Naive thymus-derived CD4-positive, alpha-beta T cell (primary cell): ENCODE measurements at regions of chr11 and their contacts with region 1.

Region 1: DNA sequence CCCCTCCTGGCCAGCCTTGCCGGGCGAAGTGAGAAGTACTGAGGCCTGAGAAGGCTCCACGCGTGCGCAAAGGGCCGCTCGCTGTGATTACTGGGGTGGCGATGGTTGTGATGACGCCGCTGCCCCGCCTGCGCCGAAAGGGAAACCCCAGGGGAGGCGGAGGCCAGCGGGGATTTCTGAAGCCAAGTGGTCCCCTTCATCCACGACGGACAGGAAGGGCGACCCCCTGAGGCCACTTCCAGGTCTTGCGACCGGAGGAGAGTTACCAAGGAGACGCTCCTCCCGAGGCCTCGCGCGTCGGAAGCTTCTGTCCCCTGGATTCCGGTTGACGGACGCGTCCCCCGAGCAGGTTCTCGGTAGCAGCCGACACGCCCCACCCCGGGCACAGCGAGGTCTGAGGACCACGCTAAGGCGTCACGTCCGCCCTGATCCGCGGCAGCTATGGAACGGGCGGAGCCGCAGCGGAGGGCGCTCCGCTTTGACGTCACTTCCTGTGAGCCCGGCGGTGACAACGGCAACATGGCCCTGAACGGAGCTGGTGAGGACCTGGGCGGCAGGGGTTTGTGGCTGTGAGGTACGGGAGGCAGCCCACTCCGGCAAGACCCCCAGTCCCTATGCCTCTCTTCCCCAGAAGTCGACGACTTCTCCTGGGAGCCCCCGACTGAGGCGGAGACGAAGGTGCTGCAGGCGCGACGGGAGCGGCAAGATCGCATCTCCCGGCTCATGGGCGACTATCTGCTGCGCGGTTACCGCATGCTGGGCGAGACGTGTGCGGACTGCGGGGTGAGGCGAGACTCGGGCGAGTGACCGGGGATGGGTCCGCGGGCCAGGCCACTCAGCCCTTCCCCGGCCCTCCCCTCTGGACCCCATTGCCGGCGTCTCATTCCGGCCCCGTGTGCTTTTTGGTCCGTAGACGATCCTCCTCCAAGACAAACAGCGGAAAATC is at the start of gene ZNRD2:
- DNase-seq: peak; percentile 94 to 99 (median 98)
- ATAC-seq: peak; percentile 82
- H3K4me3 ChIP-seq: peak within 1 kb of the TSS; percentile 96
- H3K4me3 Mint-ChIP-seq: peak within 1 kb of the TSS; percentile 91 to 100 (median 97)
- H3K27ac ChIP-seq: peak within 1 kb of the TSS; percentile 96
- H3K27ac Mint-ChIP-seq: peak within 1 kb of the TSS; percentile 89 to 100 (median 99)
- H3K4me1 ChIP-seq: peaks cover 63 to 64% of the 10 kb centered on the region in 2 donors
- H3K4me1 Mint-ChIP-seq: peaks cover 49 to 77% (median 69%) of the 10 kb centered on the region in 7 donors
- H3K27me3 ChIP-seq: no peaks in the 10 kb centered on the region
- H3K27me3 Mint-ChIP-seq: no peaks in the 10 kb centered on the region
- total RNA-seq, gene ZNRD2: 29.1 to 40.9 (median 32.9) TPM

Region 2: DNA sequence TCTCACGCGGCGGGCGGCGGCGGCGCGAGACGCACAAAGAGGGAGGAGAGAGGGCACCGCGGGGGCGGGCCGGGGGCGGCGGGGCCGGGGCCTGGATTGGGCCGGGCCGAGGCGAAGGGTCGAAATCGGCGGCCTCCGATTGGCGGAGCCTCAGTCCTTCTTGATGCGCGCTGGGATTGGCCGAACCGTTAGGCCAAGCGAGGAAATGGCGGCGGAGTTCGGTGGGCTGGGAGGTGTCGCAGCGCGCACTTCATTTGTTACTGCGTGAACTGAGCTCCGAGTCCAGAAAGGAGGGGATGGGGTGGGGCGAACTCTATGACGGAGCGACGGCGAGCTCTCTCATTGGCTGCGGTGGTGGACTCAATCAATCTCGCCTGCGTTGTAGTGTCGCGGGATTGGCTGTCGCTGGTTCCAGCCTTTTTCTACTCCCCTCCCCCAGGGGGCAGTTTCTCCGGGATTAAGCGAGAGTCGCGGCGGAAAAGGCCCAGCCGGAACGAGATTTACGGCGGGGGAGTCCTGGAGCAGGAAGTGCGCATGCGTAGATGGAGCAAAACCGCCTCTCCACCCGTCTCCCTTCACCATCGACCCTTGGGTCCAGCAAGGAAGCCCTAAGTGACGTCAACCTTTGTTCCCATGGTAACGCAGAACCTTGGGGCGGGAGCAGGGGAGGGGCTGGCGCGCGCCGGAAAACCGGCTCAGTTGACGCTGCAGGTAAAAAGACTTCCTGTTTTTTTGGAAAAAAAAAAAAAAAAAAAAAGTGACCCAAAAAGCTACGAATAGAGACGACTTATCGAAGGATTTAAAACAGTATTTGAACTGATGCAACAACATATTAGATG is 791.5 kb before region 1 on chr11 and contains the start of gene SF1:
- CTCF ChIA-PET with region 1: no interaction called
- POLR2A ChIA-PET with region 1: no interaction called
- intact Hi-C with region 1: loop called in 1 of 2 experiments (anchors 2 kb)
- DNase-seq: peak; percentile 86 to 100 (median 100)
- ATAC-seq: peak; percentile 89
- H3K4me3 ChIP-seq: peak within 1 kb of the TSS; percentile 94
- H3K4me3 Mint-ChIP-seq: peak within 1 kb of the TSS; percentile 90 to 97 (median 94)
- H3K27ac ChIP-seq: peak within 1 kb of the TSS; percentile 99
- H3K27ac Mint-ChIP-seq: peak within 1 kb of the TSS; percentile 98 to 100 (median 99)
- H3K4me1 ChIP-seq: peaks cover 48 to 52% of the 10 kb centered on the region in 2 donors
- H3K4me1 Mint-ChIP-seq: peaks cover 51 to 71% (median 64%) of the 10 kb centered on the region in 7 donors
- H3K27me3 ChIP-seq: no peaks in the 10 kb centered on the region
- H3K27me3 Mint-ChIP-seq: peaks cover 0 to 5% (median 0%) of the 10 kb centered on the region in 5 donors
- total RNA-seq, gene SF1: 462 to 1,612 (median 904) TPM

Region 3: DNA sequence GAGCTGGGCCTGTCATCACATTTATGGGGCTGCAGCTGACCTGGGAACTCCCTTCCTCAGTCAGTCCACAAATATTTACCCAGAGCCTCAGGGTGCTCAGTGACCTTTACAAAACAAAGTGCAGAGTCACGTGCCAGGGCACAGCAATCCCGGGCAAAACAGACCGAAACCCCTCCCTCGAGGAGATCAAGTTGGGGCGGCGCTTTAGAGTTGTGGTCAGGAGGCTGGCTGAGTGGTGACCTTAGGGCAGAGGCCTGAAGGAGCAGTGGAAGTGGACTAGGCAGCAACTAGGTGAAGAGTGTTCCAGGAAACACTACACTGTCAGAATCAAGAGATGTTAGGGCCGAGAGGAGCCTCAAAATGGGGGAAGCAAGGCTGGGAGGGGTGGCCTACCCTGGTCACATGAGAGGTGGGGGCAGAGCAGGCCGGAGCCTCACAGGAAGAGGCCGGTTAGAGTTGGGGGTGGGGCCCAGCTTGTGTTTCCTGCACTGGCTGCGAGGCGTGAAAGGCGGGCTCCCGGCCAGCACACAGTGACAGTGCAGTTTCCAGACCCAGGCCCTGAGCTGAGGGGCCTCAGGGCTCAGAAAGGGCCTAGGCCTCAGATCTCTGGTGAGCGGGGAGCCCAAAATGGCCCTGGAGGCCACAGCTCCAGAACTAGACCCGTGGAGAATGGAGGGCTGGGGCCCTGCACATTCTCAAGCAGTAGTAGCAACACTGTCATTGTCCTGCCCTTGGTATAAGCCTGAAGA is 151.4 kb before region 1 on chr11:
- CTCF ChIA-PET with region 1: no interaction called
- POLR2A ChIA-PET with region 1: interaction called, 8 read pairs
- intact Hi-C with region 1: loop called (anchors 2 kb)
- DNase-seq: peak; percentile 33 to 89 (median 48)
- ATAC-seq: peak; percentile 51
- H3K4me3 ChIP-seq: peak overlapping the region; percentile 82
- H3K4me3 Mint-ChIP-seq: peak overlapping the region; percentile 92 to 100 (median 97)
- H3K27ac ChIP-seq: peak overlapping the region; percentile 98
- H3K27ac Mint-ChIP-seq: peak overlapping the region; percentile 97 to 100 (median 99)
- H3K4me1 ChIP-seq: peaks cover 36 to 46% of the 10 kb centered on the region in 2 donors
- H3K4me1 Mint-ChIP-seq: peaks cover 36 to 65% (median 45%) of the 10 kb centered on the region in 7 donors
- H3K27me3 ChIP-seq: no peaks in the 10 kb centered on the region
- H3K27me3 Mint-ChIP-seq: peaks cover 0 to 15% (median 0%) of the 10 kb centered on the region in 5 donors

Region 4: DNA sequence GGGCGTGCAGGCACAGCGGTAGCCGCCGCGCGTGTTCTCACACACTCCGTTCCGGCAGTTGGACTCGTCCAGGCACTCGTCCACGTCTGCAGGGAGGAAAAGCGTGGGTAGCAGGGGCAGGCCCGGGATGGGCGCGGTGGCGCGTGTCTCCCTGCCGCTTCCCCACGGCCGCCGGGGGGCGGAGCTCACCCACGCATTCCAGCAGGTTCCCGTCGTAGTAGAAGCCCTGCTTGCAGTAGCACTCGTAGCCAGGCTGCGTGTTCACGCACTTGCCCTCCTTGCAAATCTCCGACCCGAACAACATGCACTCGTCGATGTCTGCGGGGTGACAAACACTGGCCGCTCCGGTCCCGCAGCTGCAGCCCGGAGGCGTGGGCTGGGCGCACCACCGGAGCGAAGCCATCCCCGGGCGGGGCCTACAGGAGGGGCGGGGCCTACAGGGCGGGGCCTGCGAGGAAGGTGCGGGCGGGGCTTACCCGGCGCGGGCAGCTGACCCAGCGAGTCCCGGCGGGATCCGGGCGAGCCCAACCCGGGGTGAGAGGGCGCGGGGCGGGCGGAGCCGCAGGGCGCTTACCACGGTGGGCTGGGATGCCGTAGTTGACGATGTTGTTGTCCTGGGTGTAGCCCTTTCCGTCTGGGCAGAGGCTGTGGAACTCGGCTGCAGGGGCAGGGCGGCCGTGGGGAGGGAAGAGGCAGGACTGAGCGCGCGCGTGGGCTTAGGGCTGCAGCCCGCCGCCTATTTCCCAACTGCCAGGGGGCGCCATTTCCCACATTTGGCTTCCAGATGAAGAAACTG is 29.8 kb before region 1 on chr11:
- CTCF ChIA-PET with region 1: interaction called, 57 read pairs
- POLR2A ChIA-PET with region 1: interaction called, 186 read pairs
- intact Hi-C with region 1: loop called (anchors 1 kb)
- DNase-seq: peak; percentile 84 to 95 (median 91)
- ATAC-seq: peak; percentile 94
- H3K4me3 ChIP-seq: peak overlapping the region; percentile 71
- H3K4me3 Mint-ChIP-seq: peak overlapping the region; percentile 81 to 90 (median 84)
- H3K27ac ChIP-seq: peak overlapping the region; percentile 74
- H3K27ac Mint-ChIP-seq: peak overlapping the region in 8 of 9 donors; percentile 70 to 92 (median 86)
- H3K4me1 ChIP-seq: peaks cover 12 to 18% of the 10 kb centered on the region in 2 donors
- H3K4me1 Mint-ChIP-seq: peaks cover 13 to 32% (median 22%) of the 10 kb centered on the region in 7 donors
- H3K27me3 ChIP-seq: no peaks in the 10 kb centered on the region
- H3K27me3 Mint-ChIP-seq: no peaks in the 10 kb centered on the region

Region 5: GRCh38 chr11:65558002-65558931 is 12.0 kb before region 1 on chr11 and contains the start of gene LTBP3:
- CTCF ChIA-PET with region 1: interaction called, 18 read pairs
- POLR2A ChIA-PET with region 1: interaction called, 186 read pairs
- intact Hi-C with region 1: loop called (anchors 1 kb)
- DNase-seq: peak in 2 of 9 donors; percentile 57 to 58
- ATAC-seq: peak; percentile 43
- H3K4me3 ChIP-seq: peak within 1 kb of the TSS; percentile 53
- H3K4me3 Mint-ChIP-seq: peak within 1 kb of the TSS; percentile 89 to 98 (median 94)
- H3K27ac ChIP-seq: peak within 1 kb of the TSS; percentile 89
- H3K27ac Mint-ChIP-seq: peak within 1 kb of the TSS; percentile 84 to 97 (median 92)
- H3K4me1 ChIP-seq: peaks cover 20 to 58% of the 10 kb centered on the region in 2 donors
- H3K4me1 Mint-ChIP-seq: peaks cover 46 to 73% (median 59%) of the 10 kb centered on the region in 7 donors
- H3K27me3 ChIP-seq: no peaks in the 10 kb centered on the region
- H3K27me3 Mint-ChIP-seq: no peaks in the 10 kb centered on the region
- total RNA-seq, gene LTBP3: 91.4 to 288 (median 280) TPM

Region 6: GRCh38 chr11:65637794-65638317 is 67.6 kb after region 1 on chr11 and contains the start of gene SIPA1:
- CTCF ChIA-PET with region 1: no interaction called
- POLR2A ChIA-PET with region 1: interaction called, 20 read pairs
- intact Hi-C with region 1: loop called in 1 of 2 experiments (anchors 2 kb)
- DNase-seq: peak; percentile 57 to 93 (median 74)
- ATAC-seq: peak; percentile 62
- H3K4me3 ChIP-seq: peak within 1 kb of the TSS; percentile 90
- H3K4me3 Mint-ChIP-seq: peak within 1 kb of the TSS; percentile 89 to 99 (median 95)
- H3K27ac ChIP-seq: peak within 1 kb of the TSS; percentile 97
- H3K27ac Mint-ChIP-seq: peak within 1 kb of the TSS; percentile 76 to 100 (median 97)
- H3K4me1 ChIP-seq: peaks cover 45 to 58% of the 10 kb centered on the region in 2 donors
- H3K4me1 Mint-ChIP-seq: peaks cover 26 to 52% (median 47%) of the 10 kb centered on the region in 7 donors
- H3K27me3 ChIP-seq: no peaks in the 10 kb centered on the region
- H3K27me3 Mint-ChIP-seq: no peaks in the 10 kb centered on the region
- total RNA-seq, gene SIPA1: 145 to 249 (median 198) TPM

Region 7: DNA sequence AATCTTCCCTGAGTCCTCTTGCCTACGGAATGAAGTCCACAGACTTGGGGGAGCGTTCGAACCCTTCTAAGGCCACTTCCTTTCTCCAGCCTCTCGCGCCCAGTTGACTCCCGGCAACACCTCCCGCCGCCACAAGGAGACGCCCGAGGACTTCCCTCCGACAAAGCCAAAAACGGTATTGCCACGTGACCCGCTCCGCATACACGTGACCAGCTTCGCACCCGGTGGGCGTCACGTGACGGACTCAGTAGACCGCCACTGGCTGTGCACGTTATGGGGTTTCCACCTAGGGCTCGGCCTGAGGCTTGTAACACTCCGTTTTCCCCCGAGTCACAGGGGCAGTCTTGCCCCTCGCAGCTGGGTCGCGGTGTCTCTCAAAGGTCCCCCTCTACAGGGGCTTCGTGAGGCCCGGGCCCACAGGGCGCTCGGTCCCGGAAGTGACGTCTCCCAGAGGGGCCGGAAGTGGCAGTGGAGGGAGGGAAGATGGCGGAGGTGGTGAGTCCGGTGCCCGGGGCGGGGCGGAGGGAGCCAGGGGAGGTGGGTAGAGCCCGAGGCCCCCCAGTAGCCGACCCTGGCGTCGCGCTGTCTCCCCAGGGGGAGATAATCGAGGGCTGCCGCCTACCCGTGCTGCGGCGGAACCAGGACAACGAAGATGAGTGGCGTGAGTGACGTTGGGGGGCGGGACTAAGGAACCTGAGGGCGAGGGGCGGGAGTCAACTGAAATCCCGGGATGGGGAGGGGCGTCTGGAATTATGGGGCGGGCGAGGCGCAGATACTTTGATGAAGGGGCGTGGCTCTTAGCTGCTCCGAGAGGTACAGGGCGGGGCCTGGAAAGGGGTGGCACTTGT is 141.8 kb after region 1 on chr11 and contains the start of gene KAT5:
- CTCF ChIA-PET with region 1: no interaction called
- POLR2A ChIA-PET with region 1: interaction called, 10 read pairs
- intact Hi-C with region 1: loop called in 1 of 2 experiments (anchors 5 kb)
- DNase-seq: peak; percentile 95 to 99 (median 98)
- ATAC-seq: peak; percentile 87
- H3K4me3 ChIP-seq: peak within 1 kb of the TSS; percentile 100
- H3K4me3 Mint-ChIP-seq: peak within 1 kb of the TSS; percentile 91 to 99 (median 95)
- H3K27ac ChIP-seq: peak within 1 kb of the TSS; percentile 95
- H3K27ac Mint-ChIP-seq: peak within 1 kb of the TSS; percentile 93 to 100 (median 99)
- H3K4me1 ChIP-seq: peaks cover 5 to 9% of the 10 kb centered on the region in 2 donors
- H3K4me1 Mint-ChIP-seq: peaks cover 12 to 41% (median 25%) of the 10 kb centered on the region in 7 donors
- H3K27me3 ChIP-seq: no peaks in the 10 kb centered on the region
- H3K27me3 Mint-ChIP-seq: peaks cover 0 to 5% (median 0%) of the 10 kb centered on the region in 5 donors
- total RNA-seq, gene KAT5: 68.6 to 133 (median 113) TPM